CD4-positive, alpha-beta memory T cell (primary cell): ENCODE measurements at regions of chr6 and their contacts with region 1.

Region 1: GRCh38 chr6:97497713-97498331 is 214.8 kb upstream of the MMS22L start:
- DNase-seq: peak; percentile 44 to 53 (median 46)
- H3K4me3 ChIP-seq: no peak overlapping the region
- H3K4me3 Mint-ChIP-seq: no peak overlapping the region
- H3K27ac ChIP-seq: no peak overlapping the region
- H3K27ac Mint-ChIP-seq: no peak overlapping the region
- H3K4me1 ChIP-seq: no peaks in the 10 kb centered on the region
- H3K4me1 Mint-ChIP-seq: peaks cover 0 to 3% (median 0%) of the 10 kb centered on the region in 4 donors
- H3K27me3 ChIP-seq: no peaks in the 10 kb centered on the region
- H3K27me3 Mint-ChIP-seq: peaks cover 5 to 13% of the 10 kb centered on the region in 2 donors

Region 2: DNA sequence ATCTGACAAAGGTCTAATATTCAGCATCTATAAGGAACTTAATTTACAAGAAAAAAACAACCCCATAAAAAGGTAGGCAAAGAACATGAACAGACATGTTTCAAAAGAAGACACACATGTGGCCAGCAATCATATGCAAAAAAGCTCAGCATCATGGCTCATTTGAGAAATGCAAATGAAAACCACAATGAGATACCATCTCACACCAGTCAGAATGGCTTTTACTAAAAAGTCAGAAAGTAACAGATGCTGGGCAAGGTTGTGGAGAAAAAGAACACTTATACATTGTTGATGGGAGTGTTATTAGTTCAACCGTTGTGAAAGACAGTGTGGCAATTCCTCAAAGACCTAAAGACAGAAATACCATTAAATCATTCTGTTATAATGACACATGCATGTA is 75.1 kb after region 1 on chr6:
- CTCF ChIA-PET with region 1: no interaction called
- POLR2A ChIA-PET with region 1: no interaction called
- intact Hi-C with region 1: no loop called
- DNase-seq: no peak
- H3K4me3 ChIP-seq: no peak overlapping the region
- H3K4me3 Mint-ChIP-seq: no peak overlapping the region
- H3K27ac ChIP-seq: no peak overlapping the region
- H3K27ac Mint-ChIP-seq: no peak overlapping the region
- H3K4me1 ChIP-seq: no peaks in the 10 kb centered on the region
- H3K4me1 Mint-ChIP-seq: no peaks in the 10 kb centered on the region
- H3K27me3 ChIP-seq: no peaks in the 10 kb centered on the region
- H3K27me3 Mint-ChIP-seq: no peaks in the 10 kb centered on the region

Region 3: GRCh38 chr6:98215531-98215930 is 717.7 kb after region 1 on chr6:
- CTCF ChIA-PET with region 1: no interaction called
- POLR2A ChIA-PET with region 1: no interaction called
- intact Hi-C with region 1: no loop called
- DNase-seq: no peak
- H3K4me3 ChIP-seq: no peak overlapping the region
- H3K4me3 Mint-ChIP-seq: no peak overlapping the region
- H3K27ac ChIP-seq: no peak overlapping the region
- H3K27ac Mint-ChIP-seq: no peak overlapping the region
- H3K4me1 ChIP-seq: no peaks in the 10 kb centered on the region
- H3K4me1 Mint-ChIP-seq: no peaks in the 10 kb centered on the region
- H3K27me3 ChIP-seq: no peaks in the 10 kb centered on the region
- H3K27me3 Mint-ChIP-seq: no peaks in the 10 kb centered on the region

Region 4: GRCh38 chr6:99119109-99120031 is 1621.5 kb after region 1 on chr6:
- CTCF ChIA-PET with region 1: interaction called, 12 read pairs
- POLR2A ChIA-PET with region 1: no interaction called
- intact Hi-C with region 1: no loop called
- DNase-seq: peak in 4 of 5 donors; percentile 10 to 32 (median 22)
- H3K4me3 ChIP-seq: no peak overlapping the region
- H3K4me3 Mint-ChIP-seq: no peak overlapping the region
- H3K27ac ChIP-seq: no peak overlapping the region
- H3K27ac Mint-ChIP-seq: no peak overlapping the region
- H3K4me1 ChIP-seq: no peaks in the 10 kb centered on the region
- H3K4me1 Mint-ChIP-seq: no peaks in the 10 kb centered on the region
- H3K27me3 ChIP-seq: no peaks in the 10 kb centered on the region
- H3K27me3 Mint-ChIP-seq: peaks cover 5 to 15% of the 10 kb centered on the region in 2 donors